ENCODE measurements at regions of chr2 and their contacts with region 1.

Region 1: GRCh38 chr2:165203689-165204559 is at the start of gene SCN3A:
- DNase-seq: no peak
- H3K4me3 ChIP-seq: no peak within 1 kb of the TSS
- H3K27ac ChIP-seq: no peak within 1 kb of the TSS
- H3K4me1 ChIP-seq: no peaks in the 10 kb centered on the region
- H3K27me3 ChIP-seq: no peaks in the 10 kb centered on the region
- CTCF ChIP-seq: peak in 3 of 4 experiments; percentile 16 to 51 (median 27)
- POLR2A ChIP-seq: no peak
- total RNA-seq, gene SCN3A: 0.09 to 1.6 TPM

Region 2: DNA sequence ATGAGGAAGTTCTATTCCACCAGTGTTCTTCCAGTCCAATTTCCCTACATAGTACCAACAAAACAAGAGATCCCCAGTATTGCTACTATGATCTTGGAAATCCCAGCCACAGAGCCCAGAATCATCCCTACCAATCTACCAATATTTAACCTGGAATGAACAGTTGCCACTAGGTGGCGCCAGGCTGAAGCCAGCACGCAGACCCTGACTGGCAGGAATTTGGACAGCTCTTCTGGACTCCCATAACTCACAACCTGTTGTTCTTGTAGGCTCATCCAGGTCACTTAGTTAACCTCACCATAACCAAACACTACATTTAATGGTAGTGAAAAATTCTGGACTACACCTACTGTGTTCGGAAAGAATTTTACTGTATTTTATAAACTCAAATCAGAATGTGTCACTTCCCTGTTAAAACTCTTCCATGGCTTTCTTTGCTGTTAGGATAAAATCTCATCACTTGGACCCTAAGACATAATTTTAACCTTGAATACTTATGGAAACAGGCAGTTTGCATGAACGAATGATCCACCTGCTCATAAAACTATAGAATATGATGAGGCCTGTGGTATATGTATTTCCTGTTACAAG is 188.8 kb before region 1 on chr2:
- intact Hi-C with region 1: loop called (anchors 10 kb)
- DNase-seq: peak; percentile 33
- H3K4me3 ChIP-seq: no peak overlapping the region
- H3K27ac ChIP-seq: no peak overlapping the region
- H3K4me1 ChIP-seq: no peaks in the 10 kb centered on the region
- H3K27me3 ChIP-seq: no peaks in the 10 kb centered on the region
- CTCF ChIP-seq: peak; percentile 49 to 59 (median 52)
- POLR2A ChIP-seq: no peak

Measured in prostate gland (tissue), 2 donors.